Activated CD4-positive, alpha-beta T cell treated with anti-CD3 and anti-CD28 coated beads, Interleukin-2, amount 10 ng/mL, durations not matched to agents 24 days and 14 days (primary cell): ENCODE measurements at regions of chr2 and their contacts with region 1.

Region 1: GRCh38 chr2:151289369-151290088 is at the start of gene NMI:
- DNase-seq: peak; percentile 93
- H3K4me3 Mint-ChIP-seq: peak within 1 kb of the TSS; percentile 86
- H3K27ac Mint-ChIP-seq: peak within 1 kb of the TSS; percentile 97
- H3K4me1 Mint-ChIP-seq: peaks cover 33% of the 10 kb centered on the region
- H3K27me3 Mint-ChIP-seq: no peaks in the 10 kb centered on the region
- total RNA-seq, gene NMI: 36.7 and 37.2 TPM in 2 replicates

Region 2: DNA sequence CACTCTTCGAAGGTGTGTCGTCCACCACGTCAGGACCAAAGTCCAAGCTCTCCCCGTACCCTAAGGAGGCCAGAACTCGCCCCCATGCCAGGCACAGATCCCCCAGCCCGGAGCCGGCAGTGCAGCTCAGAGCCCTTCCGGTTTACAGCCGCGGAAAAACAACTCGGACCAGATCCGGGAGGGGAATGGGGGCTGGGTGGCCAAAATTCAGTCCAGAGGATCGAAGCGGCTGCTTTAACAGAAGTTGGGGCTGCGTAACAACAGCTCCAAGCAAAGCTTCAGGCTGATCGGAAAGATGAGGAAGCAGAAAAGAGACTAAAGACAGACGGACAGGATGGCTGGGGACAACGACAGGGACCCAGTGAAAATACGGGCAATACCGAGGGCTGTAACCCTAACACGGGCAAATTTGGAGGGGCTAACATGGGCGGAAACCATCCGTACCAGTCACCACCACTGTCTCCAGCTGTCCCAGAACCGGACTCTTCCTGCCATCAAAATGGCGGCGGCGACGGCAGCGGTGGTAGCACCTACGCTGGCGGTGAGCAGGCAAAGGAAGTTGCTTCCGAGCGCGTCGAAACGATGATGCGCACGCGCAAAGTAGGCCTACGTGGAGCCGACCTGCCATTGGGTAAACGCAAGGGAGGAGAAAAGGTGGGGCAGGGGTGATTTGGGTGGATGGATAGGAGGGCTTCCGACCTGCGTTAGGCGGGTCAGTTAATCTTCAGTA is 1702.1 kb before region 1 on chr2 and contains the start of gene MMADHC:
- intact Hi-C with region 1: loop called (anchors 2 kb)
- DNase-seq: peak; percentile 98
- H3K4me3 Mint-ChIP-seq: peak within 1 kb of the TSS; percentile 97
- H3K27ac Mint-ChIP-seq: peak within 1 kb of the TSS; percentile 100
- H3K4me1 Mint-ChIP-seq: peaks cover 32% of the 10 kb centered on the region
- H3K27me3 Mint-ChIP-seq: peaks cover 21% of the 10 kb centered on the region
- total RNA-seq, gene MMADHC: 131 and 136 TPM in 2 replicates

Region 3: GRCh38 chr2:151261231-151261976 is 28.1 kb before region 1 on chr2 and contains the start of gene RBM43:
- intact Hi-C with region 1: loop called (anchors 1 kb)
- DNase-seq: peak; percentile 97
- H3K4me3 Mint-ChIP-seq: peak within 1 kb of the TSS; percentile 95
- H3K27ac Mint-ChIP-seq: peak within 1 kb of the TSS; percentile 99
- H3K4me1 Mint-ChIP-seq: peaks cover 28% of the 10 kb centered on the region
- H3K27me3 Mint-ChIP-seq: peaks cover 2% of the 10 kb centered on the region
- total RNA-seq, gene RBM43: 2.5 and 3.4 TPM in 2 replicates

Region 4: GRCh38 chr2:151409601-151410484 is 120.3 kb after region 1 on chr2 and contains the start of gene RIF1:
- intact Hi-C with region 1: loop called (anchors 1 kb)
- DNase-seq: peak; percentile 92
- H3K4me3 Mint-ChIP-seq: peak within 1 kb of the TSS; percentile 99
- H3K27ac Mint-ChIP-seq: peak within 1 kb of the TSS; percentile 95
- H3K4me1 Mint-ChIP-seq: peaks cover 21% of the 10 kb centered on the region
- H3K27me3 Mint-ChIP-seq: peaks cover 5% of the 10 kb centered on the region
- total RNA-seq, gene RIF1: 84.8 and 86.3 TPM in 2 replicates

Region 5: DNA sequence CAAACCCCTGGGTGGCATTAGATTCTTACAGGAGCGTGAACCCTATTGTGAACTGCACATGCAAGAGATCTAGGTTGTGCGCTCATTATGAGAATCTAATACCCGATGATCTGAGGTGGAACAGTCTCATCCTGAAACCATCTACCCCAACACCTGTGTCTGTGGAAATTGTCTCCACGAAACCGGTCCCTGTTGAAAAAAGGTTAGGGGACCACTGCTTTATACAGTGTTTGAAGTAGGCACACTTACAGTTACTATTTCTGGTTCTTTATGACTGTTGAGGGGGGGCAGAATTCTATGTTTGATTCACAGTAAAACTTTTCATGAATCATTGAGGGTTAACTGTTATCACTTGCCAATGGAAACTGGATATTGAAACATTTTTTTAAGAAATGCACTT is 192.2 kb after region 1 on chr2:
- intact Hi-C with region 1: loop called (anchors 2 kb)
- DNase-seq: no peak
- H3K4me3 Mint-ChIP-seq: no peak overlapping the region
- H3K27ac Mint-ChIP-seq: peak overlapping the region; percentile 80
- H3K4me1 Mint-ChIP-seq: peaks cover 17% of the 10 kb centered on the region
- H3K27me3 Mint-ChIP-seq: no peaks in the 10 kb centered on the region